ENCODE measurements at regions of chr2 and their contacts with region 1.

Region 1: GRCh38 chr2:54704688-54705605 is 18.5 kb upstream of the EML6 start:
- DNase-seq: no peak
- ATAC-seq: peak in 7 of 8 donors; percentile 58 to 75 (median 65)
- H3K4me3 ChIP-seq: no peak overlapping the region
- H3K27ac ChIP-seq: peak overlapping the region in 2 of 10 donors; percentile 2 to 5
- H3K4me1 ChIP-seq: peaks cover 0 to 15% (median 7%) of the 10 kb centered on the region in 9 donors
- H3K27me3 ChIP-seq: peaks cover 0 to 21% (median 0%) of the 10 kb centered on the region in 7 donors
- CTCF ChIP-seq: peak; percentile 41 to 79 (median 72)

Region 2: DNA sequence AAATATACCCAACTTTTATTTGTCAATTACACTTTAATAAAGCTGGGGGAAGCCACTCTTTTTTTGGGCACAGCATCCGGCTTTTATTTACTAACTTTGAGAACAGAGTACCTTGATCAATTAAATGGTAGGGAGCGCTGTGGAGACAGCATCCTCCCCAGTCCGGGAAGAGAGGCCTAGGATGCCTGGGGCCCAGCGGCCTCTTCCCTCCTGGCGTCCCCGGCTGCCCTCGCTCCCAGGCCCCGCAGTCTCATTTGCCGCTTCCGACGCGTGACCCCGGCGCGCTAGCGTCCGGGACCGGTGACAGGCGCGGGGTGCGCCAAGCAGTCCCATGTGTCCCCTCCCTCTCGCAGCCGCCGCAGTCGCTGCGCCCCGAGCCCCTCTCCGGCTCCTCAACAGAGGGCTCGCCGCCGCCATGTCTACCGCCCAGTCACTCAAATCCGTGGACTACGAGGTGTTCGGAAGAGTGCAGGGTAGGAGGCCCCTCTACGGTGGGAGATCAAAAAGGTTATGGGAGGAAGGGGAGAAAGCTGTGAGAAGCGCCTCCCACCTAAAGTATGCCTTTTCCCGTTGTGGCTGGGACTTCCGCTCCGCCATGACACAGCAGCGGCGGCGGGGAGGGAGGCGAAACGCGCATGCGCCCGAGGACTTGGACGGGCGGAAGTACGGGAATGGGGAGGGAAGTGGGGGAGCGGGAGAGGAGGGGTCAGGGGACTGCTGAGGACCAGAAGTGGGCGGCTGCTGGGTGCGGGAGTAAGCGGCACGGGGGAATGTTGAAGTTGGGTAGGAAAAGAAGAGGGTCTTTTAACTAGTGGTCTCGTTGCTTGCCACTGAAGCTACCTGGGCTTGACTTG is 589.4 kb before region 1 on chr2 and contains the start of gene ACYP2:
- intact Hi-C with region 1: loop called in 2 of 10 experiments (anchors 2 to 10 kb)
- DNase-seq: peak; percentile 97 to 98
- ATAC-seq: peak; percentile 97 to 99 (median 99)
- H3K4me3 ChIP-seq: peak within 1 kb of the TSS; percentile 49 to 87 (median 64)
- H3K27ac ChIP-seq: peak within 1 kb of the TSS; percentile 94 to 100 (median 98)
- H3K4me1 ChIP-seq: peaks cover 0 to 14% (median 8%) of the 10 kb centered on the region in 9 donors
- H3K27me3 ChIP-seq: no peaks in the 10 kb centered on the region
- CTCF ChIP-seq: peak in 6 of 9 donors; percentile 10 to 54 (median 38)
- total RNA-seq, gene ACYP2: 48.6 to 87.1 (median 78.1) TPM

Region 3: DNA sequence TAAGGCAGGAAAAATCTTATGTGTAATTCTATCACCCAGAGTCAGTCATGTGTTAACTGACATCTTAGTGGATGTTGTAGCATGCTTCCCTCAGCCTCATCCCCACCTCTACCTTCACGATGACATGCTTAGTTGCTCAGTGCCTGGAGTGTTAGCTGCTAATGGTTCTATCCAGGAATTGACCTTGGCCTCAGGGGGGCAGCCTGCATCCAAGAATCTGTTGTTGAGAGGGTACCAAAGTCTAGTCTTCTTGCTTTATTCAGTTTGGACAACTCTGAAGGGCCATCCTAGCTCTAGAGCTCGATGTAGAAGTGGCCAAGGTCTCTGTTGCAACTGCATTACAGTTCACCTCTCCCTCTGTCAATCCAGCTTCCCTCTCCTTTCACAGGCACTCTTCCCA is 528.4 kb before region 1 on chr2:
- intact Hi-C with region 1: loop called in 8 of 10 experiments (anchors 2 to 10 kb)
- DNase-seq: peak; percentile 37 to 58
- ATAC-seq: peak in 7 of 8 donors; percentile 58 to 92 (median 85)
- H3K4me3 ChIP-seq: no peak overlapping the region
- H3K27ac ChIP-seq: no peak overlapping the region
- H3K4me1 ChIP-seq: peaks cover 0 to 5% (median 0%) of the 10 kb centered on the region in 9 donors
- H3K27me3 ChIP-seq: no peaks in the 10 kb centered on the region
- CTCF ChIP-seq: peak in 8 of 9 donors; percentile 21 to 71 (median 54)

Region 4: DNA sequence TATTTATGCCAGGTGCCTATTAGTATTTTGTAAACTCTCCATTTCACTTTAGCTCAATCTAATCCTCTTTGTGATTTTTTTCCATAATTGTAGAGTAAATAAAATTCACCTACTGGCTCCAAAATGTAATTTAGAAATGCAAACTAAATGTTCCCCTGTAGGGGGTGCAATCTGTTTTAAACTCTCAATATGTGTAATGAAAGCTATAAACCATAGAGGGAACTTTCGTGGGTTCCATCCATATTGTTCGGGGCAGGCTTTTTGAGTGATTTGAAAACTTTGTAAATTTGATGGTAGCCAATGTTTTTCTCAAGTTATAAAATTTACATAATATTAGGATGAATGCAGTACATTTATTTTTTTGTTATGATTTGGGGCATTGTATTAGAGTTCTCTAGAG is 498.4 kb before region 1 on chr2:
- intact Hi-C with region 1: loop called in 2 of 10 experiments (anchors 10 kb)
- DNase-seq: no peak
- ATAC-seq: peak in 4 of 8 donors; percentile 34 to 66 (median 42)
- H3K4me3 ChIP-seq: no peak overlapping the region
- H3K27ac ChIP-seq: peak overlapping the region in 1 of 10 donors; percentile 84
- H3K4me1 ChIP-seq: peaks cover 2 to 36% (median 33%) of the 10 kb centered on the region in 9 donors
- H3K27me3 ChIP-seq: no peaks in the 10 kb centered on the region
- CTCF ChIP-seq: peak; percentile 50 to 87 (median 71)

Region 5: DNA sequence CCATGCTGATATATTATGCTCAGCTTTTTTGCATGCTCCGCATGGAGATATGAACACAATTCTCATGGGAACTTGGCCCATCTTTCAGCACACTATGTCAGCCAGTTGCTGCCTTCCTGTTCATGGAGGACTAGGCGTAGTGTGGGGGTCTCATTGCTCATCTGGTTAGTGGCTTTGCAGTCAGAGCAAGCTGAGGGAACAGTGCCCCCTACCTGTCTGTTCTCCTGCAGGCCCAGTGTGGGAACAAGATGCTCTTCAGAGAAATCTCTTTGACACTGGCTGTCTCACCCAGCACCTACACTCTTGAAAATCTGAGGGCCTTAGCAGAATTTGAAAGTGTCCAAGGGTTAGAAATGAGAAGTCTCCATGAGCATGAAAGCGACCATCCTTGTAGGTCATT is 201.8 kb before region 1 on chr2:
- intact Hi-C with region 1: no loop called
- DNase-seq: no peak
- ATAC-seq: peak in 4 of 8 donors; percentile 20 to 57 (median 23)
- H3K4me3 ChIP-seq: no peak overlapping the region
- H3K27ac ChIP-seq: peak overlapping the region in 3 of 10 donors; percentile 14 to 72 (median 24)
- H3K4me1 ChIP-seq: peaks cover 49 to 100% (median 99%) of the 10 kb centered on the region in 9 donors
- H3K27me3 ChIP-seq: no peaks in the 10 kb centered on the region
- CTCF ChIP-seq: peak in 8 of 9 donors; percentile 23 to 65 (median 48)

Region 6: GRCh38 chr2:54522624-54523281 is 182.2 kb before region 1 on chr2:
- intact Hi-C with region 1: loop called in 4 of 10 experiments (anchors 2 to 10 kb)
- DNase-seq: peak in 1 of 2 donors; percentile 57
- ATAC-seq: peak in 6 of 8 donors; percentile 28 to 55 (median 46)
- H3K4me3 ChIP-seq: no peak overlapping the region
- H3K27ac ChIP-seq: peak overlapping the region in 5 of 10 donors; percentile 70 to 86 (median 76)
- H3K4me1 ChIP-seq: peaks cover 21 to 99% (median 95%) of the 10 kb centered on the region in 9 donors
- H3K27me3 ChIP-seq: no peaks in the 10 kb centered on the region
- CTCF ChIP-seq: peak; percentile 26 to 74 (median 66)